ENCODE measurements at regions of chr11 and their contacts with region 1.

Region 1: GRCh38 chr11:114148013-114148382 is 88.5 kb downstream of the ZBTB16 start:
- DNase-seq: no peak
- H3K4me3 Mint-ChIP-seq: no peak overlapping the region
- H3K27ac Mint-ChIP-seq: peak overlapping the region; percentile 99
- H3K4me1 Mint-ChIP-seq: peaks cover 72% of the 10 kb centered on the region
- H3K27me3 Mint-ChIP-seq: no peaks in the 10 kb centered on the region
- CTCF ChIP-seq: no peak

Region 2: DNA sequence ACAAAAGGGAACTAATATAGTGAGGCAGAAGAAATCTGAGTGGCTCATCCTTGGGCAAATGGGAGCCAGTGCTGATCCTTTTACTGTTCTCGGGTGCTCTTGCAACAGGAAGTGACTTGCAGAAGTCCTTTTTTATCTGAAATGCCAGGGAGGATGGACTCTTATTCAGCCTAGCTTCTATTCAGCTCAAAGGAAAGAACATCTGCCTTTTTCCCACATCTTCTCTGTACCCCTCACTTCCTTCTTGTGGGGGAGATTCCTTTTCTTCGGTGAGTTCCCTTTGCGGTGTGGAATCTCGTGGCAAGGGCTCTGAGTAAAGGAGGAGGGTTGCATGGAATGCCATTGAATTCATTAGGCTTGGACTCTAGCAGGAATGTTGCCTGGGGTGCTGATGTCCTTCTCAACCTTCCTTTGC is 12.3 kb before region 1 on chr11:
- CTCF ChIA-PET with region 1: interaction called, 6 read pairs
- POLR2A ChIA-PET with region 1: interaction called, 26 read pairs
- intact Hi-C with region 1: no loop called
- DNase-seq: no peak
- H3K4me3 Mint-ChIP-seq: no peak overlapping the region
- H3K27ac Mint-ChIP-seq: peak overlapping the region; percentile 86
- H3K4me1 Mint-ChIP-seq: peaks cover 64% of the 10 kb centered on the region
- H3K27me3 Mint-ChIP-seq: no peaks in the 10 kb centered on the region
- CTCF ChIP-seq: no peak